Common myeloid progenitor, CD34-positive (primary cell): ENCODE measurements at regions of chr2 and their contacts with region 1.

Region 1: DNA sequence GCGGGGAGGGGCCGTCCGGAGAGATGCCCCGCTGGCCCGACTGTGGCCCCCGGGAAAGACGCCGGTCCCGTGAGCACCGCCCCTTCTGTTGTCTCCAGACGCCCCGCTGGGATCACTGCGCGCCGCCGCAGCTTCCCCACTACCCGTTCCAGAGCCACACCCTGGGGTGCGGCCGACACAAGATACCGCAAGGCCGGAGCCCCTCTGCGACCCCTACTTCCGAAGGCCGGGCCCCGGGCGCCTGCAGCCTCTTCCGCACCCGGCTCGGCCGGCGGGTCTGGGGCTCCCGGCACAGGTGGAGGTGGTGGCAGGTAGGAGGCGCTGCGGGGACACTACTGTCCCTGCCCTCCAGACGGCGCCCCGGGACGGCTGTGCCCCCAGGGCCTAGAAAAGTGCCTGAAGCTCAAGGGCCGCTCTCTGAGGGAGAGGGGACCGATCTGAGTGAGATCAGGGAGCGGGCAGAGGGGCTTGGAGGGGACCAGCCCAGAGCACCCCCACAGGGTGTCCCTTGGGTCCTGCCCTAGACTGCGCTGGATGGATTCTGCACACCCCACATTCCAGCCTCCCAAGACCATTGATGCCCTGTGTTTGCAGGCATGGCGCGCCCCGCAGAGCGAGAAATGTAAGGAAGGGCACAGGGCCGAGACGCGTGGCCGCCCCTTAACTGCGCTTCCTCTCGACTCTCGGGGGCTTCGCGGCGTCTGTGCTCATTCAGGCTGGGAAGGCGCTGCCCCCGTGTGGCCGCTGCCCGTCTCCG is 80.0 kb downstream of the GFPT1 start:
- DNase-seq: peak; percentile 82 to 92 (median 92)
- H3K4me3 ChIP-seq: peak overlapping the region; percentile 32 to 77 (median 69)
- H3K27ac ChIP-seq: no peak overlapping the region
- H3K4me1 ChIP-seq: peaks cover 0 to 32% (median 22%) of the 10 kb centered on the region in 4 experiments
- H3K27me3 ChIP-seq: peaks cover 0 to 40% (median 20%) of the 10 kb centered on the region in 5 experiments

Region 2: GRCh38 chr2:68943581-68944568 is 363.1 kb before region 1 on chr2:
- CTCF ChIA-PET with region 1: interaction called, 17 read pairs
- POLR2A ChIA-PET with region 1: no interaction called
- DNase-seq: peak; percentile 42 to 73 (median 63)
- H3K4me3 ChIP-seq: no peak overlapping the region
- H3K27ac ChIP-seq: no peak overlapping the region
- H3K4me1 ChIP-seq: peaks cover 0 to 2% (median 0%) of the 10 kb centered on the region in 4 experiments
- H3K27me3 ChIP-seq: no peaks in the 10 kb centered on the region

Region 3: GRCh38 chr2:69026026-69026425 is 281.0 kb before region 1 on chr2:
- CTCF ChIA-PET with region 1: interaction called, 62 read pairs
- POLR2A ChIA-PET with region 1: no interaction called
- DNase-seq: peak; percentile 58 to 77 (median 68)
- H3K4me3 ChIP-seq: no peak overlapping the region
- H3K27ac ChIP-seq: no peak overlapping the region
- H3K4me1 ChIP-seq: no peaks in the 10 kb centered on the region
- H3K27me3 ChIP-seq: peaks cover 2 to 17% (median 6%) of the 10 kb centered on the region in 5 experiments

Region 4: GRCh38 chr2:69196327-69197117 is 110.5 kb before region 1 on chr2:
- CTCF ChIA-PET with region 1: no interaction called
- POLR2A ChIA-PET with region 1: no interaction called
- DNase-seq: no peak
- H3K4me3 ChIP-seq: no peak overlapping the region
- H3K27ac ChIP-seq: no peak overlapping the region
- H3K4me1 ChIP-seq: no peaks in the 10 kb centered on the region
- H3K27me3 ChIP-seq: peaks cover 0 to 4% (median 0%) of the 10 kb centered on the region in 5 experiments

Region 5: DNA sequence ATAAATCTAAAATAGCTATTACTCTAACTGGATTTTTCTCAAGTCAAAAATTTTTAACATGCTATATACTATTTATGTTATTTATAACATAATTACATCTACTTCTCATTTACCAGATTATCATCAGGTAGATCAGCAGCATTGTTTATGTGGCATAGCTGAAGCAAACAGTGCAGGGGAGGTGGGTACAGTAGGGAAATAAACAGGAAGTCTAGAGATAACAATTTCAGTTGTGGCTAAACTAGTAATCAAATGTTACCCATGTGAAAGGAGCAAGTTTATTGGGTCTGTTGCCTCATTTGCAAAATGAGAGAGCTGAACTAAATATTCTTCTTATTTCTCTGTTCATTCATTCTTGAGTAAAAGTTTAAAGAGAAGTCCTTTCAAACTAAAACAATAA is 52.4 kb after region 1 on chr2:
- CTCF ChIA-PET with region 1: no interaction called
- POLR2A ChIA-PET with region 1: no interaction called
- DNase-seq: no peak
- H3K4me3 ChIP-seq: no peak overlapping the region
- H3K27ac ChIP-seq: no peak overlapping the region
- H3K4me1 ChIP-seq: no peaks in the 10 kb centered on the region
- H3K27me3 ChIP-seq: no peaks in the 10 kb centered on the region